ENCODE measurements at regions of chr20 and their contacts with region 1.

Region 1: DNA sequence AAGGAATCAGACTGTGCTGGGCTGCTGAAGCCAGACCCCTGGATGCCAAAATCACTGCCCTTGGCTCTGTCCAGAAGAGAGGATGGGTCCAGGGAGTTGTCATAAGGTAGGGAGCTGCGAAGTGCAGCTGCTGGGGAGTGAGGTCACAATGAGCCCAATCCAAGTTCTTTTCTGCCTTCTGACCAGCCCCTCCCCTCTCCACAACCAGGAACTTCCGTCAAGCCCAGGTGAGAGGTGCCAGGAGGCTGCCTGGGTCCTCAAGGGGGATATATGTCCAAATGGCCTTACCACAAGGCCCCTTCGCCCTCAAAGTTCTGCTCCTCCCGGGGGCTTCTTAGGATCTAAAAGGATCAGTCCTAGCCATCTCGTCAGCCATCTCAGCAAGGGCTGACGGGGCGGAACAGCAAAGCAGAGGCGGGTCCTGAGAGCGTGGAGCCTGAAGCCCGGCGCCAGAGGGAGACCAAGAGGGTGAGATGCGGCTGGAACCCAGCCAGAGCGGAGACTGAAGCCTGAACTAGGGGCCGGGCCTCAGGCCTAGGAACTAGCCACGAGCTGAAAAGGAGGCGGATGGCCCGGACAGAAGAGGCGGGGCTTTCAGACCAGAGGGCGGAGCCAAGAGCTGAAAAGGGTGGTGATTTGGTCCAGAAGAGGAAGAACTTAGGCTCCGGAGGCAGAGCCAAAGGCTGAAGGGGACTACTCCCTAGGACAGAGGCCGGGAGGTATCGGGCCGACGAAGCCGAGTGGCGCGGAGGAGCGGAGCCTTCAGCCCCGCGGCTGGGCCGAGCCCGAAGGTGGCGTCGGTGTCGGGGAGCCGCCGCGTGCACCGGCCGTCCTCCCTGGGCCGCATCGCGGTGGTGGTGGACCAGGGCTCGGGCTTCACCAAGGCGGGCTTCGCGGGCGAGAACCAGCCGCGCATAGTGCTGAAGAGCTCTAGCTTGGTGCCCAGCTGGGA is at the start of gene ACTL10:
- DNase-seq: peak; percentile 97 to 99 (median 98)
- H3K4me3 ChIP-seq: peak within 1 kb of the TSS; percentile 40 to 79 (median 62)
- H3K27ac ChIP-seq: no peak within 1 kb of the TSS
- H3K4me1 ChIP-seq: peaks cover 0 to 44% (median 41%) of the 10 kb centered on the region in 4 experiments
- H3K27me3 ChIP-seq: no peaks in the 10 kb centered on the region

Region 2: DNA sequence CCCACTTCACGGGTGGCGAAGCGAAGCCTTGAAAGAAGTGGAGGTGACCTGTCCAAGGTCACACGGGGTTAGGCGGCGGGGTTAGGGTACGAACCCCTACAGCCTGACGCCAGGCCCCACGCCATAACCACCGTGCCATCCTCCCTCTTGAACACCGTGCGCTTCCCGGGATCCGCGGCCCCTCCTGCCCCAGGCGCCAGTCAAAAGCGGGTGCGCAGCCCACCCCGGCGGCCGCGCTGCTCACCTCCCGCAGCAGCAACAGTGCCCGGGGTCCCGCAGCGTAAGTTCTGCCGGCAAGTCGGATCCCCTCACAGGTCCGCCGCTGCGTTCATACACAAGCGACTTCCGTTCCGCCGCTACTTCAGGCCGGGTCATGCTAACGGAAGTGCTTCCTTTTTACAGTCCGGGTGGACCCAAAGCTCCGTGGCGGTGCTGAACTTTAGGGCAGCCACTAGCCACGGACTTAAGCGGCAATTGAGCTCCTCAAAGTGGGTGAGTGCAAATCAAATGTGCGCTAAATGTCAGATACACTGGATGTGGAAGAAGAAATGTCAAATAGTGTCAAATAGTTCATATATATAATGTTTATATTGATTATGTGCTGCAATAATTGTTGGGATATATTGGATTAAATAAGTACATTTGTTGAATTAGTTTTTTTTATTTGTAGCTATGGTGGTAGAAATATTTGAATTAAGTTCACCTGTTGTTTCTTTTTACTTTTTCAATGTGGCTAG is 265.2 kb before region 1 on chr20 and contains the start of gene CDK5RAP1:
- CTCF ChIA-PET with region 1: interaction called, 10 read pairs
- POLR2A ChIA-PET with region 1: no interaction called
- DNase-seq: peak; percentile 93 to 96 (median 95)
- H3K4me3 ChIP-seq: peak within 1 kb of the TSS; percentile 89 to 100 (median 97)
- H3K27ac ChIP-seq: peak within 1 kb of the TSS; percentile 55 to 86
- H3K4me1 ChIP-seq: peaks cover 0 to 23% (median 17%) of the 10 kb centered on the region in 4 experiments
- H3K27me3 ChIP-seq: no peaks in the 10 kb centered on the region

Region 3: DNA sequence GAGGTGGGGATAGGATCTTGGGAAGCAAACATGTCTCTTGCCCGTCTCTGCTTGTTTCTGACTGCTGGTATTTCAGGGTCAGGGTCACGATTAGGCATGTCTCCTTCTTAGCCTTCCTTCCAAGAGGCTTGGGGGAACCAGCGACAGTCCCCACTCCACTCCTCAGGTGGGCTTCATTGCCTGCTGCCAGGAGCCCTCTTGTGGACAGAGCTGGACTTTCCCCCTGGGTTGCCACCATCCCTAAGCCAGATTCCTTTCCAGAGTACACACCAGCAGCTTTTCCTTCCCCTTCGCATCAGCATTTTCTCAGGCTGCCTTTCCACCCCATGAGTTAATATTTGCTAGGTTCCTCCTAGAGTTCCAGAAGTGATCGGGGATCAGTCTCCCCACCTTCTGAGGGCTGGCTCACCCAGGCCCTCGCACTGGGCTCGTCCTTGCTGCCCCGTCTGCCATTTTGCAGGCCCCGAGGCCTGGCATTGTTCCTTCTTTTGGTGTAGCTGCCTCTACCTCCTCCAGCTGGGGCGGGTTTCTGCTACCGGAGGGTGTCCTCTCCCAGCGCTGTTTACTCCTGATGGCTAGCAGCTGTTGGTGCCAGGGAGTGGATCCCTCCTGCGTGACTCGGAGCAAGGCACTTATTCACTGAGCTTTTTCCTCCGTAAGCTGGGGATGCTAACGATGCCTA is 13.2 kb before region 1 on chr20:
- CTCF ChIA-PET with region 1: interaction called, 86 read pairs
- POLR2A ChIA-PET with region 1: interaction called, 6 read pairs
- DNase-seq: peak; percentile 55 to 77 (median 70)
- H3K4me3 ChIP-seq: no peak overlapping the region
- H3K27ac ChIP-seq: no peak overlapping the region
- H3K4me1 ChIP-seq: peaks cover 0 to 2% (median 0%) of the 10 kb centered on the region in 4 experiments
- H3K27me3 ChIP-seq: no peaks in the 10 kb centered on the region

Region 4: DNA sequence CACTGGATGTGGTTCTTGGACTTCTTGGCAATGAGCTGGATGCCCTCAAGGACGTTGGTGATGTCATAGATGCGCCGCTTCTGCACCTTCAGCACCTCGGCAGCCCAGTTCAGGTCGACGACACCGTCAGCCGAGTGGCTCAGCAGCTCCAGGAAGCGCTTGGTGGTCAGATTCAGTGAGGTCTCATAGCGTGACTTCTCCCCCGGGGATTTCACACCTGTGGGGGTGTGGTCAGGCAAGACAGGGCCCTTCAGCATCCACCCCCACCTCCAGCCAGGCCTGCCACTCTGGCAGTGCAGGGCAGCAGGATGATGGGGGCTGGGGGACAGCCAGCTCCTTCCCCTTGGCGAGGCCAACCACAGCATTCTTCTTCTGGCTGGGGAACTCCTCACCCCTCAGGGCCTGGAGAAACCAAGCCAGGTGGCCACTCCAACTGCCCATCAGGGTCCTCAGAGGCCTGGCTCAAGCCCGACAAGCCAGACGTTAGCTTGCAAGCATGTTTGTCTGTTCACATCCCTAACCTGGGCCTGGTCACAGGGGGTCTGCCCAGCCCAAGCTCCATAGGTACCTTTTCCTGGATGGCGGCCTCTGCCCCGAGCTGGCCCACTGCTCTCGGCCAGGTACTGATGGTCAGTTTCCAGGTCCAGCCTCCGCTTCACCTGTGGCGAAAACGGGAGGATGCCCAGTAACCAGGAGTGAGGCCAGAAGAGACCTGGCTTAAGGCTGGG is 13.4 kb after region 1 on chr20:
- CTCF ChIA-PET with region 1: interaction called, 44 read pairs
- POLR2A ChIA-PET with region 1: no interaction called
- DNase-seq: no peak
- H3K4me3 ChIP-seq: no peak overlapping the region
- H3K27ac ChIP-seq: no peak overlapping the region
- H3K4me1 ChIP-seq: peaks cover 0 to 14% (median 8%) of the 10 kb centered on the region in 4 experiments
- H3K27me3 ChIP-seq: no peaks in the 10 kb centered on the region

Measured in common myeloid progenitor, CD34-positive (primary cell).